ENCODE measurements at regions of chr18 and their contacts with region 1.

Region 1: DNA sequence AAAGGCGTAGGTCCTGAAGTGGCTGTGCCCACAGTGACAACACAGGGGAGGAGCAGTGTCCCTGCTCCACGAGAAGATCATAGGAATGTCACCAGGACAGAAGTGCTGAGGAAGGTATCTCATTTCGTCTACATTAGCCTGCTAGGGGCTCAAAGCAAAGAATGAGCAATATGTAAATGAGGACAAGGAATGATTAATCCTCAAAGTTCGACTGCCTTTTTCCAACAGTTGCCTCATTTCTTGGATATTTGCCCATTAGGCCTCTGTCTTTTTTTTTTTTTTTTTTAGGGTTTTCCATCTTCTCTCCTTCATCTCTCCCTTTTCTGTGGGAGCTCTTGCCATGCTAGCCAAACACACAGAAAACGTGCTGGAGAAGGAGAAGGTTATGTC is 105.2 kb upstream of the ARHGAP28 start:
- DNase-seq: peak; percentile 61
- H3K4me3 Mint-ChIP-seq: peak overlapping the region; percentile 15
- H3K27ac Mint-ChIP-seq: peak overlapping the region; percentile 84
- H3K4me1 Mint-ChIP-seq: peaks cover 27% of the 10 kb centered on the region
- H3K27me3 Mint-ChIP-seq: no peaks in the 10 kb centered on the region
- CTCF ChIP-seq: no peak

Region 2: GRCh38 chr18:6382963-6383362 is 241.3 kb before region 1 on chr18:
- CTCF ChIA-PET with region 1: no interaction called
- POLR2A ChIA-PET with region 1: no interaction called
- intact Hi-C with region 1: no loop called
- DNase-seq: no peak
- H3K4me3 Mint-ChIP-seq: no peak overlapping the region
- H3K27ac Mint-ChIP-seq: no peak overlapping the region
- H3K4me1 Mint-ChIP-seq: peaks cover 5% of the 10 kb centered on the region
- H3K27me3 Mint-ChIP-seq: peaks cover 32% of the 10 kb centered on the region
- CTCF ChIP-seq: no peak

Region 3: DNA sequence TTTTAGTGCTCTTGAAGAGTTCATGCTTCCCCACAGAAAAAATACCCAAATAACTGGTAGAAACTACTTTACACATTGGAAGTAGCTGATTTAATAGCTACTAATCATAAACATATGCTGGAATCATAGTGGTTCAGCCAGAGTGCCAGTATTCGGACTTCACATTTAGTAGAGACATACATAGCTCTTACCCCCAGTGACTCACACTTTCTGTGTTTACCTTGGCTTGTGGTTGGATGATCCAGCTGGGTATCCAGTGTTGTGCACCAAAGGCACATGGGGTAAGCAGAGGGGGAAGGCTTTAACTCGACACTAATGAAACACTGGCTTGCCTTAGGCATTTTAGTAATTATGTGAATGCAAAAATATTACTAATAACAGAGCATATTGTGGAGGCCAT is 123.4 kb after region 1 on chr18:
- CTCF ChIA-PET with region 1: no interaction called
- POLR2A ChIA-PET with region 1: no interaction called
- intact Hi-C with region 1: loop called (anchors 5 kb)
- DNase-seq: peak; percentile 94
- H3K4me3 Mint-ChIP-seq: no peak overlapping the region
- H3K27ac Mint-ChIP-seq: no peak overlapping the region
- H3K4me1 Mint-ChIP-seq: peaks cover 32% of the 10 kb centered on the region
- H3K27me3 Mint-ChIP-seq: no peaks in the 10 kb centered on the region
- CTCF ChIP-seq: no peak

Measured in MCF 10A (cell line).